PC-3 (cell line): ENCODE measurements at regions of chr10 and their contacts with region 1.

Region 1: DNA sequence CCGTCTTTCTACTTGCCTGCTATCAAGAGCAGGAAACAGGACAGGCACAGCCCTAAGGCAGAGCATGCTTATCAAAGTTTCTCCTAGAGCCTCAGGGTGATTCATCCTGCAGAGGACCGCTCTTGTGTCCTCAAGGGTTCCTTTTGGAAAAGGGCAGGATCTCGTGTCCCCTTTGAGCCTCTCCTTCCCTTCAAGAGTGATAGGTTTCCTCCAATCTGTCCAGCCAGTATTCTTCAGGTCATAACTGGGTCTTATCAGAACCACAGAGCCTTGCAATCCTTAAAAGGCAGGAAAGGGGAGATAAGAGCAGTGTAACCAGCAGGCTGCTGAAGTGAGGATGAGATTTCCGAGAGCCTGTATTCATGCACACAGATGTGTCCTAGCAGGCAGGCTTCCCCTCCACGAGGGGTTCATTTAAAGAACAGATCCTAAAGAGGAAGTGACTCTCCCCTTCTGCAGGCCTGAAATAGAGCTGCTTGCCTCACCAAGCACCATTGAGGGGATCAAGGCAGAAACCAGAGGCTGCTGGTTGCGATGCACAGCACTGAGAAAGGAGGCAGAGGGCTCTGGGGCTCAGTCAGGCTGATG is 90.5 kb upstream of the SVIL start:
- DNase-seq: no peak
- ATAC-seq: no peak
- H3K4me3 ChIP-seq: no peak overlapping the region
- H3K27ac ChIP-seq: no peak overlapping the region
- H3K4me1 ChIP-seq: peaks cover 9% of the 10 kb centered on the region; the same call in 1 of the 2 replicates
- H3K27me3 ChIP-seq: no peaks in the 10 kb centered on the region
- CTCF ChIP-seq: no peak

Region 2: DNA sequence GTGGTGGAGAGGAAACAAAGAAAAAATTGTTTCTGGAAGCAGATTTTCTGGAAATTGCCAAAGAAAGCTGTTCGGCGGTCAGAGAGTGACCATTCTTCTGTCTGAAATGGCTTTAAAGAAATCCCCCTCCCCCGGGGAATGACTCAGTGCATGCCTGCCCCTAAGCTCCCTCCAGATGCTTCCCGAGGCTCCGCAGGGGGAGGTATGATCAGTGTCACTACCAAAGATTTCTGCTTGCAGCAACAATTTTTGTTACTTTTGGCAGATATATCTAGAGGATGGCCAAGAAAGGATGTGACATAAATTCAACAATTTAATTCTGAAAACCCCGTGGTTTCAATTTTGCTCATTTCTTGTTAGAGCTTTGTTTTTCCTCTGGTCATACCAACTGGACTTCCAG is 170.2 kb after region 1 on chr10:
- CTCF ChIA-PET with region 1: interaction called, 11 read pairs
- POLR2A ChIA-PET with region 1: no interaction called
- intact Hi-C with region 1: no loop called
- DNase-seq: no peak
- ATAC-seq: no peak
- H3K4me3 ChIP-seq: no peak overlapping the region
- H3K27ac ChIP-seq: no peak overlapping the region
- H3K4me1 ChIP-seq: no peaks in the 10 kb centered on the region
- H3K27me3 ChIP-seq: no peaks in the 10 kb centered on the region
- CTCF ChIP-seq: no peak

Region 3: GRCh38 chr10:30127120-30127541 is 401.9 kb after region 1 on chr10:
- CTCF ChIA-PET with region 1: no interaction called
- POLR2A ChIA-PET with region 1: no interaction called
- intact Hi-C with region 1: no loop called
- DNase-seq: no peak
- ATAC-seq: no peak
- H3K4me3 ChIP-seq: no peak overlapping the region
- H3K27ac ChIP-seq: no peak overlapping the region
- H3K4me1 ChIP-seq: no peaks in the 10 kb centered on the region
- H3K27me3 ChIP-seq: no peaks in the 10 kb centered on the region
- CTCF ChIP-seq: no peak

Region 4: GRCh38 chr10:30803892-30804322 is 1078.7 kb after region 1 on chr10:
- CTCF ChIA-PET with region 1: no interaction called
- POLR2A ChIA-PET with region 1: no interaction called
- intact Hi-C with region 1: no loop called
- DNase-seq: no peak
- ATAC-seq: no peak
- H3K4me3 ChIP-seq: no peak overlapping the region
- H3K27ac ChIP-seq: no peak overlapping the region
- H3K4me1 ChIP-seq: no peaks in the 10 kb centered on the region
- H3K27me3 ChIP-seq: no peaks in the 10 kb centered on the region
- CTCF ChIP-seq: no peak